ENCODE measurements at regions of chr18 and their contacts with region 1.

Region 1: DNA sequence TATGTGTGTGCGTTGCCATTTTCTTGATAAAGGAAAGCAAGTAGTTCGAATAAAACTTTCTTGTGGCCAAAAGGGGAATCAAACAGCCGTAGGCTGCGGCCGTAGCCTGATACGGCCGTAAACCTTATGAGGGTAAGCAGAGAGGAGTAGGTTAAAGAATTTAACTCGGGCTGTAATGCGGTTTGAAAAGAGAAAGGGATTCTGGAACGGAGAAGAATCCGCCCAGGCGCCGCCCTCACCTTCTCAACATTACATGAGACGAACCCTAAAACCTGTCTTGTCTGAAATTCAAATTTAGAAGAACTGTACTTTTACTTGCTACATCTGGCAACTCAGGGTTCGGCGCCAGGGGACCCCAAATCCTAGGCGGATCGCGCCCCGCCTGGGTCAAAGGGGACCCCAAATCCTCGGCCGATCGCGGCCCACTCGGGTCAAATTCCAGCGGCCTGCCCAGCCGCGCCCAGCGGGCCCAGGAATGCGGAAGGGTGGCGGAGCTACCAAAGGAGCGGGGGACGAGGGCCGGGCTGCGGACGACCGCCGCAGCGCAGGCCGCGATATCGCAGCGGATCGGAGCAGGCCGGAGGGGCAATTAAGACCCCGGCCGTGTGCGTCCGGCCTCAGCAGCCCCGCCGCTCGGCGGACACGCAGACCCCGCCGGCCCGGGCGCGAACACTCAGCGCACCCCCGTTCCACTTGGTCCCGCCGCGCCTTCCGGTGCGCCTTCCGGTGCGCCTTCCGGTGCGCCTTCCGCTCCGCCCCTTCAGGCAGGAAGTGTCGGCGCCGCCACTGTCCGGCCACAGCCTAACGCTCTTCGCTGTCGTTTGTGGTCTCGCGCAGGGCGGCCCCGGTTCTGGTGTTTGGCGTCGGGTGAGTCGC is at the start of gene MYL12B:
- DNase-seq: peak; percentile 22 to 87
- H3K4me3 ChIP-seq: peak within 1 kb of the TSS; percentile 94 to 96
- H3K27ac ChIP-seq: peak within 1 kb of the TSS; percentile 96 to 100
- H3K4me1 ChIP-seq: peaks cover 18 to 42% of the 10 kb centered on the region in 2 donors
- H3K27me3 ChIP-seq: no peaks in the 10 kb centered on the region
- CTCF ChIP-seq: peak in 1 of 3 experiments; percentile 27
- total RNA-seq, gene MYL12B: 198 TPM

Region 2: GRCh38 chr18:2948038-2948437 is 313.6 kb before region 1 on chr18:
- intact Hi-C with region 1: no loop called
- DNase-seq: no peak
- H3K4me3 ChIP-seq: no peak overlapping the region
- H3K27ac ChIP-seq: no peak overlapping the region
- H3K4me1 ChIP-seq: peaks cover 0 to 6% of the 10 kb centered on the region in 2 donors
- H3K27me3 ChIP-seq: no peaks in the 10 kb centered on the region
- CTCF ChIP-seq: peak in 1 of 3 experiments; percentile 30

Region 3: DNA sequence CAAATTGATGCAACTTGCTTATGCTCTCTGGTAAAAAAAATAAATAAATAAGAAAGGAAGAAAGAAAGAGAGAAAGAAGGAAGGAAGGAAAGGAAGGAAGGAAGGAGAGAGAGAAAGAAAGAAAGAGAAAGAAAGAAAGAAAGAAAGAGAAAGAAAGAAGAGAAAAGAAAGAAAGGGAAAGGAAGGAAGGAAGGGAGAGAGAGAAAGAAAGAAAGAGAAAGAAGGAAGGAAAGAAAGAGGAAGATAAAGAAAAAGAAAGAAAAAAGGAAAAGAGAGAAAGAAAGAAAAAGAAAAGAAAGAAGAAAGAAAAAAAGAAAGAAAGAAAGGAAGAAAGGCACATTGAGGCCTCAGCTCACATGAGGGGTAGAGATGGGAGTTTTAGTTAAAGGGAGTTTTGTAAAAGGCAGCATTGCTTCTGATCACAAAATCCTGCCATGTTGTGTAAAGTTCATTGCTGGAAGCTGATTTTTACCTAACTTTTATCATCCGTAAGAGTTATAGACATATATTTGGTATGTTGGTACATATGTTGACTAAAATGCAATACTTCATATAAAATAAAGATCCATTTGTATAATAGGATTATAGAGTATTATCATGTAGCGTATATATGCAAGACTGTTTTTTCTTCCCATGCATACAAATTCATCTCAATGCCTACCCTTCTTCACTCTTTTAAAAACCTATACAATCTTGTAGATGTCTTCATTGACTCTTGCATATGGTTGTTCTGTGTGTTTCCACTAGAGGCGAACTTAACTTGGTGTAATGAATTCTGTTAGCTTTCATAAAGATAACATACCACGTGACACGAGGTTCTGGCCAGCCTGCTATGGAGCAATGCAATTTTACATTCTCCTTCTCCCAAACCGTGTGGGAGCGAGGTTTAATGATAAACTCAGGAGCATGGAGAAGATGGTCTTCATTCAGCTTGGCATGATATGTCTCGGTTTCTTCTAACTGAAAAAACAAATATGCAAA is 74.6 kb before region 1 on chr18:
- intact Hi-C with region 1: no loop called
- DNase-seq: no peak
- H3K4me3 ChIP-seq: no peak overlapping the region
- H3K27ac ChIP-seq: no peak overlapping the region
- H3K4me1 ChIP-seq: no peaks in the 10 kb centered on the region
- H3K27me3 ChIP-seq: no peaks in the 10 kb centered on the region
- CTCF ChIP-seq: no peak

Region 4: DNA sequence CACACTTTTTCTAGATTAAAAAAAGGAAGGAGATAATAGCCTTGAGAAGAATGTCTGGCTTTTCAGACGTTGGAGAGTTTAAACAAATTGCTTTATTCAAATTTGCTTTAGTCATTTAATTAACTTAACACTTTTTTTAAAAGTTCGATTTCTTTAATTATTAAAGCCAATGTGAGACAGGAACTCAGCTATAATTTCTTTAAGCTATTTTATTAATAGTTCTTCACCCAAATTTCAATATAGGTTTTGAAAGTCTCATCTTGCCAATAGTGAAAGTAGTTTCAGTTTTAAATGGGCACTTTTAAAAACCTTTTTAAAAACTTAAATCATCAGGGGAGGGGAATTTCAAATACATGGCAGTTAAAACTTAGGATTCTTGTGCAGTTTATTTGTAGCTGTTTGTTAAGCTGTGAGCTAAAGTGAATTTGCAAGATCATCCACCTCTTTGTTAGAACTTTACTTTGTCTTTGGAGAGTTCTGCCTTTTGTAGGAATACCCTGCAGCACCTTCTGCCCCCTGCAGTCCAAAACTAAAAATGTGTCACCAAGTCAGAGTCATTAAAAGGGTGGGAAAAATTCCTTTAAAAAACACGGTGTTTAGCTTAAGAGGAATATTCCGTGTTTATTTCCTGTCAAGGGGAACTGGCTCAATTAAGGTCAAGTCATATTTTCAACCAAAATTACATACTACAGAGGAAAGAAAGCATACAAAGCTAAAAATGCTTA is 192.9 kb after region 1 on chr18:
- intact Hi-C with region 1: loop called (anchors 2 kb)
- DNase-seq: no peak
- H3K4me3 ChIP-seq: peak overlapping the region; percentile 79 to 86
- H3K27ac ChIP-seq: peak overlapping the region; percentile 81 to 100
- H3K4me1 ChIP-seq: peaks cover 3 to 25% of the 10 kb centered on the region in 2 donors
- H3K27me3 ChIP-seq: no peaks in the 10 kb centered on the region
- CTCF ChIP-seq: peak; percentile 54 to 65 (median 60)